IMR-90 (cell line): ENCODE measurements at regions of chr1 and their contacts with region 1.

Region 1: DNA sequence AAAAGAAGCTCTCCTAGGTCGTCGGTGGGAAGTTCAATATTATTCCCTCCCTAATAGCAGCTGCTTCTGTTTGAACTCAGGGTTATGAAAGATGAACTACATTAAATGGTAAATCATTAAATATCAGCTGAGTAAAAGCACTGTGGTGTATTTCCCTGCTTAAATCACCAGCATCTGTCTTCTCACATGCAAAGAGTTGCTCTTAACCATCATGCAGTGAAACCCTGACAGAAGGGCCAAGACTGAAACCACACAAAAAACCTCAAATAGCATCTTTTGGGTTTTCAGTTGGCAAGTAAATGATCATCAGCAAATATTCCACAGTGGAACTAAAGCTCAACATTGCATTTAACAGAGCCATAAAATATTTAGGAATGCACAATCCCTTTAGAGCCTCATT is 380.0 kb upstream of the ADGRL2 start:
- DNase-seq: no peak
- ATAC-seq: no peak
- H3K4me3 ChIP-seq: no peak overlapping the region
- H3K27ac ChIP-seq: no peak overlapping the region
- H3K4me1 ChIP-seq: no peaks in the 10 kb centered on the region; the same call in 1 of the 2 replicates
- H3K27me3 ChIP-seq: no peaks in the 10 kb centered on the region
- CTCF ChIP-seq: no peak
- POLR2A ChIP-seq: no peak
- RAD21 ChIP-seq: no peak

Region 2: DNA sequence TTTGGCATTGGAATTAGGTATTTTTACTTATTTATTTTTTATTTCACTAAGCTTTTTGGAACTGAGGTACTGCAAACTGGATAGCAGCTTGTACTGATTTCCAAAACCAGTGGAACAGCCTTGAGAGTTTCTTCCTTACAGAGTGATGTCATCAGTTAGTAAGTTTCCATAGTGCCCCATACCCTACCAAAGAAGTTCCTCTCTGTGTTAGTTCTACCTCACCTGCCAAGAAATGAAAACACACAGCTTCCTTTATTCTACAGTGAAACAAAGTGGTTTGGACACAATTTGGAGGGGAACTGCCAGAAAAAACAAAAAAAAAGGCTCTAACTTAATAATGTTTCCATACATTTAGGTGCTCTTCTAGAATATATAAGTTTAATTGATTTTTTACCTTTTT is 50.9 kb before region 1 on chr1:
- CTCF ChIA-PET with region 1: no interaction called
- POLR2A ChIA-PET with region 1: no interaction called
- dilution Hi-C with region 1: no loop called
- in situ Hi-C with region 1: no loop called
- intact Hi-C with region 1: loop called (anchors 10 kb)
- DNase-seq: no peak
- ATAC-seq: no peak
- H3K4me3 ChIP-seq: no peak overlapping the region
- H3K27ac ChIP-seq: no peak overlapping the region
- H3K4me1 ChIP-seq: no peaks in the 10 kb centered on the region
- H3K27me3 ChIP-seq: no peaks in the 10 kb centered on the region
- CTCF ChIP-seq: no peak
- POLR2A ChIP-seq: no peak
- RAD21 ChIP-seq: no peak